ENCODE measurements at regions of chr18 and their contacts with region 1.

Region 1: GRCh38 chr18:13520306-13520705 is 206.1 kb downstream of the FAM210A start:
- DNase-seq: peak; percentile 78
- ATAC-seq: peak; percentile 92

Region 2: DNA sequence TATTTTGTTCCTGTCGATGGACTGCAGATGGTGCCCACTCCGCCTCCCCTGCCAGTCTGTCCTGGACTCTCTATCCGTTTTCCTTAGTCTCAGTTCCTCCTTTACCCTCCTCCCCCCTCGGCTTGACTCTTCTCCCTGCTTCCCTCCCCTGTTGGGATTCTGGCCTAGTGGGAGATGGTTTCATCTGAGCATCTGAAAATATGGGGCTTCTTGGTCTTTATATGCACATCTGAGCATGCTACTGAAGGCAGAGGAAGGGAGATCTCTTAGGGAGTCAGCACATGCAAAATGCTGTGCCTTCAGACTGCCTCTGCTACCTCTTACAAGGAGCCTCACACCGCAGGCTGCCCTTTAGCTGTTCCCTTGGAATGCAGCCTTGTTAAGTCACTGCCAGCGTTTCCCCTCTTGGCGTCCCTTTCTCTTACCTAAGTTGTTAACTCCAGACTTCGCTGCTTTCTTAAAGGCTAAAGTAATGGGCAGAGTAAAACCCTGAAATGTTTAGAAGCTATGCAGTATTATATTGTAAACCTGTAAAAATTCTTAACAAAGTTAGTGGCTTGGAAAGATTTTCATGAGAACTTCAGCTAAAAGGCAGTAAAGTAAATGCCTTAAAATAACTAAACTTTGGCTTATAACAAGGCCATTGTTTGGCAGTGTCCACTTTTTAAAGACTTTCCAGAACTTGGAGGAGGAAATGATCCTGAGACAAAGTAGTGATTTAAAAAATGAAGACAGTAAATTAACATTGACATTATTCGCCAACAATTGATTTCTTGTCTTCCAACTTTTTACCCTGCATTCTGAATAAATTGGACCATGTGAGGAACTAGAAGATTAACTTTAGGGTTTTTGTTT is 251.9 kb before region 1 on chr18:
- intact Hi-C with region 1: loop called (anchors 2 kb)
- DNase-seq: no peak
- ATAC-seq: no peak

Region 3: DNA sequence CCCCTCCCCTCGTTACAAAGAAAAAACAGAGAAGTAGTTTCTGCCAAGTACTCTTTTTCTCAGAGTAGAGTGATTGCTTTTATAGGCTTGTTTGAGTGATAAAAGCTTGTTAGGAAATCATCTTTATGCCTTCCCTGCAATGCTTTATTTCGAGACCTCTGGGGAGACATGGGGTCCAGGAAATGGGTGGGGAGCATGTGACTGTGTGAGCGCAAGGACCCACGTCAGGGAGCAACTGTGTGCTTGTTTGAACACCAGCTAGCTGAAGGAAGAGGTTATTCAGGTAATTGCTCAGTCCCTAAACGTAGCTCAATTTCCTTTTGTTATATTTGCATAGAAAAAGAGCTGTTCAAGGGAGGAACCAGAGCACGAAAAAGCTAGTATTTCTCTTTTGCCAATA is 18.7 kb after region 1 on chr18:
- intact Hi-C with region 1: no loop called
- DNase-seq: no peak
- ATAC-seq: no peak

Measured in Right ventricle myocardium inferior (tissue), 1 donor.